ENCODE measurements at regions of chr5 and their contacts with region 1.

Region 1: DNA sequence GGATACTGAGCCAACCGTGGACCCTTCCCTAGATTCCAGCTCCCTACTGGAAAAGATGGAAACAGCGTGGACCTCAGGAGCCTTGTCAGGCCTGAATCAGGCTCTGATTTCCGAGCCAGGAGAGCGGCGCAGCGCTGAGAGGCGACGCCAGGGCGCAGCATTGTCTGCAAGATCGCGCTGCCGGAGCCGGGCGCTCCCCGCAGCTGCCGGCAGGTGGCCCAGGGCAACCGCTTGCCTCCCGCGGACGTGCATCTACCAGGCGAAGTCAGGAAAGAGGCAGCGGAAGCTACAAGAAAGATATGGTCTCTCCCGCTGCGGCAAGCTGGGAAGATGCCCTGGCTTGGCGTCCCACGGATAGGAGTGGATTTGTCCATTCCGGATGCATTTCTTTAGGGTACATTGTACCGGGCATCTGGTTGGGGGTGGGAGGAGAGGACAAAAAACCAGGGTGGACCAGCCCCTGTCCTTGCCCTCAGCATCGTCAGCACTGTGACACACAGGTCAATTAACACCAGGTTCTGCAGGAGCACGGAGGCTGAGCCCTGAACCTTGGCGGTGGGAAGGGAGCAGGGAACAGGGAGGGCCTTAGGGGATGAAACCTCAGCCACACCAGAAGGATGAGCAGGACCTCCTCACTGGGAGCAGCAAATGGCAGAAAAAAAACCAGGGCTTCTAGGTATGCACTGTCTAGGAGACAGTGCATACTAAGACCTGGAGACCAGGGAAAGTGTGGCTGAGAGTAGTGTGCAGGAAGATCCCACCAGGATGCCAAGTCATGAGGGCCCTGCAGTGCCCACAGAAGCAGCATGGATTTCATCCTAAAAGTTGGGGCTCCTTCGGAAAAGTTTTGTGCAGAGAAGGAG is 55.9 kb downstream of the SFXN1 start:
- DNase-seq: peak; percentile 87
- H3K4me3 Mint-ChIP-seq: peak overlapping the region; percentile 33
- H3K27ac Mint-ChIP-seq: peak overlapping the region; percentile 9
- H3K4me1 Mint-ChIP-seq: peaks cover 42% of the 10 kb centered on the region
- H3K27me3 Mint-ChIP-seq: no peaks in the 10 kb centered on the region

Region 2: DNA sequence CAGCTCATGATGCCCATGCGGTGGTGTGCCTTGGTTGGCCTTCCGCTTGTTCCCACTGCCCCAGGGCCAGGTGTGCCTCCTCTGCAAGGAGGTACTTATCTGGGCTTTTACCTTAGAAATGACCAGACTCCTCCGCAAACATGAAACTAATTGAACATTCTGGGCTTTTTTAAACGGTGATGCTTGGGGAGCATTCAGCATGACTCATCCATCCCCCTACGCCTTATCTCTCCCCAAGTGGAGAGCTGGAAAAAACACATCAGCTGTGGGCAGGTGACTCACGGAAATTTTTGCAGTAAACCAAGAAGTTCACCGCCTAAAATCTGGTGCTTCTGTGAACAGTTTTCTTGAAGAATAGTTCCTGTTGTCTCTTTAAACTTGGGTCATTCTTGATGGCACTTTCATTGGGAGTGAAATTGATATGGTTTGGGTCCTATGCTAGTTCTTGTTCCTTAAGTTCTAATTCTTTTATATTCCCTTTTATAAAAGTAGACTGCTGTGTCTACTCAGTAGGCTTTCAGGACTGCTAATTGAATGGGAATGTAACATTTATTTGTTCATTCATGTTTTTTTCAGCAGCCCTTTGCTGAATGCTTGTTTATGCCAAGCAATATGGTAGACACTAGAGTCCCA is 16.4 kb before region 1 on chr5:
- CTCF ChIA-PET with region 1: interaction called, 14 read pairs
- DNase-seq: peak; percentile 62
- H3K4me3 Mint-ChIP-seq: peak overlapping the region; percentile 4
- H3K27ac Mint-ChIP-seq: peak overlapping the region; percentile 84
- H3K4me1 Mint-ChIP-seq: peaks cover 77% of the 10 kb centered on the region
- H3K27me3 Mint-ChIP-seq: no peaks in the 10 kb centered on the region

Region 3: DNA sequence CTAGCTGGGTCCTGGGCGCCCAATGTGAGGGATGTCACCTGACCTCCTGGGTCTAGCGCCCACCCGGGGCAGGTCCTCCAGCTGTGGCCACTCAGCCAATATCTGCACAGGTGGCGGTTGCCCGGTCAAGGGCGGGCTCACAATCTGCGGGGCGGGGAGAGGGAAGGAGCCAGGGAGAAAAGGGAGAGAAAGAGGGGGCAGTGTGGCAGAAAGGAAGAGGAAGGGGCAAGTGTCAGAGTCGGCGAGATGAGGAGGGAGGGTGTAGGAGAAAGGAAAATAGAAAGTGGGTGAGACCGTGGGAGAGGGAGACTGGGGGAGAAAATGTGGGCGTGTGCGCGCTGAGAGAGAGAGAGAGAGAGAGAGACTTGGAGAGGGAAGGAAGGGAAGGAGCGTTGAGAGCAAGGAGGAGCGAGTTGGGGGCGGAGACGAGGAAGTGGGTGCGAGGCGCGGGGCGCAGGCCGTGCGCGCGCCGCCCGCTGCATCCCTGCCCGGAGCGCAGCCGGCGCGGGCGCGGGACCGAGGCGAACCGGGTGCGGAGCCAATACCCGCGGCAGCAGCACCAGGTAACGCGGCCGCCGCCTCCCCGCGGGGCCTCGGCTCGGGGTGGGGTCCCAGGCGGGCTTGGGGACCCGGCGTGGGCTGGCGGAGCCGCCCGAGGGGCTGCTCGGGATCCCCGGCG is 123.4 kb after region 1 on chr5 and contains the start of gene HRH2:
- CTCF ChIA-PET with region 1: interaction called, 28 read pairs
- DNase-seq: peak; percentile 78
- H3K4me3 Mint-ChIP-seq: peak within 1 kb of the TSS; percentile 94
- H3K27ac Mint-ChIP-seq: peak within 1 kb of the TSS; percentile 82
- H3K4me1 Mint-ChIP-seq: peaks cover 91% of the 10 kb centered on the region
- H3K27me3 Mint-ChIP-seq: no peaks in the 10 kb centered on the region

Region 4: DNA sequence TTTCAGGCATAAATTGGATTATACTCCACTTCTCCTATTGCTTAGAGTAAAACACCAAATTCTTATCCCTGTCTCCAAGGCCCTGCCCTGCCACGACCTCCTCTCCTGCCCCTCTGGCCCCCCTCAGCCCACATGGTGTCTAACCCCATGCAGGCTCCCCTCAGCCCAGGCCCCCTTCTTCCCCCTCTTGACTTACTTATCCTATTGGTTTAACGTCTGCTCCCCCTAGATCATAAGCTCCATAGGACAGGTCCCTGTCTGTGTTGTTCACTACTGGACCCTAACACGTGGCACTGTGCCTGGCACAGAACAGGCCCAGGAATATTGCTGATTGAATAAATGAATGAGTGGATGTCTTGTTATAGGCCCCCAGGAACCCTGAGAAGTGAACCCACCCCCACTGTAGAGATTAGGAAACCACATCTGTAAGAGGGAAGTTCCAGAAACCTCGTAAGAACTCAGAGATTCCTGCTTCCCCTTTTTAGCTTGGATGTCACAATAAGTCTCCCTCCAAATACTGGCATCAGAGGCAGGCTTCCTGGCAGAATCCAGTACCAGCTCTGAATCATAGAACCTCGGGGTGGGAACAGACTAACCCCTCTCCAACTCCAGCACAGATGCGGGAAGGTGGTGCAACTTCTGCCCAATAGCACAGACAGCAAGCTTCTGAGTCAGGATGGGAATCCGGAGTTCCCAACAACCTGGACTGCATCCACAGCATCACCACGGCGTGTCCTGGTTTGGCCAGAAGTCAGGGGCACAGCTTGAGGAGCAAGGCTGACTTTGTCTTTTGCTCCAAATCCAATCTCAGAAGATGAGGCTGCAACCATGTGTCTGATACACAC is 155.1 kb after region 1 on chr5:
- CTCF ChIA-PET with region 1: interaction called, 27 read pairs
- DNase-seq: no peak
- H3K4me3 Mint-ChIP-seq: no peak overlapping the region
- H3K27ac Mint-ChIP-seq: no peak overlapping the region
- H3K4me1 Mint-ChIP-seq: peaks cover 46% of the 10 kb centered on the region
- H3K27me3 Mint-ChIP-seq: no peaks in the 10 kb centered on the region

Region 5: DNA sequence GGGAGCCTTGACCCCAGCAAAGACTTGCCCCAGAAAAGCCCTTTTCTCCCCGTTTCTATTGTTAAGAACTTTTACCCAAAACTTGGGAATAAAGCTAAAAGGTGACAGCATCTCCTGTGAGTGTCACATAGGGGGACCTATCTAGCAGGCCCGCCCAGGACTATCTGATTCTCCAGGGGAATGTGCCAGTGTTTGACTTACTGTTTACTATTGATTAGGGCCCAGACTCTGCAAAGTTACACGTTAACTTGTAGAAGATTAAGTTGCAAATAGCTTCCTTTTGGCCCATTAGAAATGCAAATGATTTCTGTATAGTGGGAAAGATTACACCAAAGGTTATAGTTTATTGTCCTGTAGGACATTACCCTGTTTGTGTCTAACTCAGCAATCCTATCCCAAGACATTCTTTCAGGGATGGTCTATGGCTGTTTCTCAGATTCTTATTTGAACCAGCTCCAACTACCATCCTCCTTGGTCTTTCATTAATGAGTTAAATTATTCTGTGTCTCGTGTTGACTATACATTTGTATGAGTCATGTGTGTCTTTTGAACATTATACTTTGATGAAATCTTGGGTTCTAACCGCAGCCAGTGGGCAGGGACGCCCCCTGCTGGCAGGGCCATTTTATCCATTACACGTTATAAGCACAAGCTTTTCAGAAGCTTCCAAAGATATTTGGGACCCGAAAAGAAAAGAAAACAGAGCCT is 184.3 kb after region 1 on chr5:
- CTCF ChIA-PET with region 1: interaction called, 99 read pairs
- DNase-seq: peak; percentile 74
- H3K4me3 Mint-ChIP-seq: no peak overlapping the region
- H3K27ac Mint-ChIP-seq: no peak overlapping the region
- H3K4me1 Mint-ChIP-seq: peaks cover 6% of the 10 kb centered on the region
- H3K27me3 Mint-ChIP-seq: peaks cover 15% of the 10 kb centered on the region